Right ventricle myocardium inferior (tissue), 1 donor: ENCODE measurements at regions of chr1 and their contacts with region 1.

Region 1: DNA sequence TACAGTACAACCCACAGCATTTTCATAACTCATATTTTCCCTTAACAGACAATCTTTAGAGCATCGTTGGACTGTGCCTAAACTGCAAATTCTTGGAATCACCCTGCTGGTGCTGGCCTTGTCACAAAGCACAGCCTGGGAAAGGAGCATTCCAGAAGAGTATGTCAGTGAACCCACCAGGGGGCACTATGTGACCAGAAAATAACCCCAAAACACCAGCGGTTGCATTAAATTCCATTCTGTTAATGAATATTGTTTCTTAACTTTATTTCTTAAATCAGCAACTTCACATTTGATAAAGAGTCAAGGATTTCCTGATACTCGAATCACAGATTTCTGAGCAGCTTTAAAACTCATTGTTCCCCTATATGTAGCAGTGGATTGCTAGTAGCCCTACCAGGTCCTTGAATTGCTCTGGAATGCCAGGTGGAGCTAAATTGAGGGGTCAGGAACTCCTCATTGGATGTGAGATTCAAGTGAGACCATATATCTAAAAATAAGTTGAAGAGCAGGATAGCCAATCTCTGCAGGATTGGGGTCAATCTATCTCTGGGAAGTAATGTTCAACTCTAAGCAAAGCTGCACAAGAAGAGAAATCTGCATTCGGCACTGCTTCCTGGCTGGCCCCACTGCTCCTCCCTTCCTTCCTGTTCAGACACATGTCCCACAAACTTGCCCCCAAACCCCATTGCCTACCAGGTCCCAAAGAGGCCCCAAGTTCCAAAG is 12.7 kb upstream of the RAB4A start:
- DNase-seq: no peak
- ATAC-seq: peak; percentile 68

Region 2: GRCh38 chr1:228691926-228692325 is 566.3 kb before region 1 on chr1:
- intact Hi-C with region 1: loop called (anchors 10 kb)
- DNase-seq: no peak
- ATAC-seq: no peak

Region 3: DNA sequence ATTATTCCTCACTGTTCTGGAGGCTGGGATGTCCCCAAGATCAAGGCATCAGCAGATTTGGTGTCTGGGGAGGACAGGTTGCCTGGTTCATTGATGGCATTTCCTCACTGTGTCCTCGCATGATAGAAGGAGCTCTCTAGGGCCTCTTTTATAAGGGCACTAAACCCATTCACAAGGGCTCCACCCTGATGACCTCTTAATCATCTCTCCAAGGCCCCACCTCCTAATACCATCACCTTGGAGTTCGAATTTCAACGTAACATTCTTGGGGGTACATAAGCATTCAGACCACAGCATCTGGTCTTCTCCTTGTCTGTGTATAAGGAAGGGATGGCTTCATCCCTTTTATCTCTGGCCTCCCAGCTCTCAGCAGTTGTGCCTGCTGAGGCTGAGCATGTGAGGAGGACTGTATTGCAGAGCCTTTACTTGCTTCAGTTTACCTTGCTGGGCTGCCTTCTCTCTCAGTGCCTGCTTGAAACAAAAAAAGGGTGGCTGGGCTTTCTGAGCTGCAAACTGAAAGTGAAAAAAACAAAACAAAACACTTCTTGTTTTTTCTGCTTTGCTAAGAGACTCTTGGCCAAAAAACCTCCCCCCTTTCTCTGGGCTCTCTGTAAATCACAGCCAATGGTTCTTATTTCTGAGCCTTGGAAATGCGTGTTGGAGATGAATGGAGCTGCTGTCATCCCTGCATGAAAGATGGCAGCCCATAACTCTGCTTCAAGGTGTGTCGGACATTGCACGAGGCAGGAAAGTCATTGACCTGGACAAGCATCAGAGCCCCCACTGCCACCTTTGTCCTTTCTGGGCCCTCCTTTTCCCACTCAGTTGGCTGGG is 447.1 kb before region 1 on chr1:
- intact Hi-C with region 1: no loop called
- DNase-seq: no peak
- ATAC-seq: peak; percentile 64

Region 4: DNA sequence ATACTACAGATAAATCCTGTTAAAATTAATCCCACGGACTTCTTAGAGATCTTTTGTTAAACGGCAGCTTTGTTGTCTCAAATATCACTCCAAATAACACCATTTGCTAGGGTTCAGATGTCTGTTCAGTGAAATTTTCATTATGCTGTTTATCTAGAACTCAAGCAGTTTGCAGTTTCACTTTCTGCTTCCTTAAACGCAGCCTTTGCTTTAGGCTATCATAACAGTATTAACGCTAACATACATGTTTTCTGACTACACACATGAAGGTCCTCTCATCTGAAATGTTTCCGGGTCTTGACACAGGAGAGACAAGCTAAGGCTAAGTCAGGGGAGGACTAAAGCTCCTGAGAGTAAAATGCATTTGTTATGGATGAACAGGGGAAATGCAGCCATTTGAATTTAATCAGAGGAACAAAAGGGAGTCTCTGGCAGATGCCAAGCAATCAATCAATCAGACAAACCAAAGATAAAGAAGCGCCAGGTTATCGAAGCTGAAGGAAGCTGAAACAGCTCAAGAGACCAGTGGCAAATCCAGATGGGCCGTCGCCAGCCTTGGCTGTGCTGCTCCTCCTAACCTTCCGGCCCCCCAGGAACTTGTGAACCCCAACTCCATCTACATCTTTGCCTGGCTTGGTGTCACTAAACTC is 67.8 kb after region 1 on chr1:
- intact Hi-C with region 1: no loop called
- DNase-seq: no peak
- ATAC-seq: no peak

Region 5: GRCh38 chr1:229482511-229482910 is 224.3 kb after region 1 on chr1:
- intact Hi-C with region 1: loop called (anchors 1 kb)
- DNase-seq: no peak
- ATAC-seq: no peak

Region 6: GRCh38 chr1:229514578-229515275 is 256.5 kb after region 1 on chr1:
- intact Hi-C with region 1: loop called (anchors 1 kb)
- DNase-seq: peak; percentile 74
- ATAC-seq: peak; percentile 74